IMR-90 (cell line): ENCODE measurements at regions of chr7 and their contacts with region 1.

Region 1: DNA sequence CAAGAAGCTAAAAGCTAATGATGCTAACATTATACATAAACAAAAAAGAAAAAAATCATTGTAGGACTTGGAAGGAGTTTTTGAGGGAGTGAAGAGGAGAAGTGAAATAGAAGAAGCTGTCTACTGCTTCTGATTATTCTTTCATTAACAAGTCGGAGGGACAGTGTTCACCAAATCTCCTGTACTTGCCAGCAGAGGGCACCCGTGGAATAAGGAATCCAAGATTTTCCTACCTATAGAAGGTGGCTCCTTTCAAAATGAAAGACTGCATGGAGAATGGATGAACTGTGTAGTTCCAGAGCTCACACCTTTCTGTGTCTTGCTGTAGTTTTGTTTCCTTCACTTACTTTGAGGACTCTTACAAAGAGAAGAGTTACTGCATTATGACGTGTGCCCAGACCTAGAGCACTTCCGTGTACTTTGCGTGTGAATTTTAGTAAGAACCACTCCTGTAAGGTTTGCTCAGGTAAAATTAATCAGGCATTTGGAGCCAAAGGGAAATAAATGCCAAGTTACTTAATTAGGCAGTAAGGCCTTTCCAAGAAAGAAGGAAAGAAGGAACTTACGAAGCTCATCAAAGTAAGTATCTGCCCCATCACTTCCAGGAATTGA is 145.1 kb downstream of the SEMA3D start:
- DNase-seq: peak; percentile 69
- ATAC-seq: peak; percentile 73
- H3K4me3 ChIP-seq: no peak overlapping the region
- H3K27ac ChIP-seq: no peak overlapping the region
- H3K4me1 ChIP-seq: no peaks in the 10 kb centered on the region
- H3K27me3 ChIP-seq: no peaks in the 10 kb centered on the region
- CTCF ChIP-seq: peak; percentile 86
- POLR2A ChIP-seq: no peak
- RAD21 ChIP-seq: peak; percentile 92

Region 2: DNA sequence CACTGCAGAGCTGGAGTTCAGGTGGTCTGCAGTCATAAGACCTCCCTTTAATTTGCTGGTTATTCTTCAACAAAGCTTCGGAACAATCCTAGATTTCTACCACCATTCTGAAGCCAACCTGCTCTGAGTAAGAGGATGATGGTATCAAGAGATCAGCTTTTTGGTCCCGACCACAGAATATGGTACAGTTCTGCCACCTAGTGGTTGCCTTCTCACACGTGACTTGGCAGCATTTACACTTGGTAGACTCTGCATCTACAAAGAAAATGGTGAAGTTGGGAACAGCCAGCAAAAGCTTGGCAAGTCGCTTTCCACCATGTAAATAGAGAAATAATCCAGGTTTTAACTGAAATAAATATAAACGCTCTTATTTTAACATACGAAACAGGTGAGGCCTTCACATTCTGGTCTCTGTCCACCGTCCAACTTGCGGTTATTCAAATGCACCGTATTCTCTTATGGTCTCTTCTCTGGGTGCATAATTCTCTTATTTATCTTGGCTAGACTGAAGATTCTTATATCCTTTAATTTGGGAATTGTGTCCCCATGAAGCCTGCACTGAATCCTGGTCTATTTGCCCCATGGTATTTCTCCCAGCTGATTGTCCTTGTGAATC is 1428.1 kb after region 1 on chr7:
- CTCF ChIA-PET with region 1: no interaction called
- POLR2A ChIA-PET with region 1: no interaction called
- dilution Hi-C with region 1: no loop called
- in situ Hi-C with region 1: no loop called
- intact Hi-C with region 1: loop called (anchors 10 kb)
- DNase-seq: peak; percentile 55
- ATAC-seq: no peak
- H3K4me3 ChIP-seq: no peak overlapping the region
- H3K27ac ChIP-seq: no peak overlapping the region
- H3K4me1 ChIP-seq: no peaks in the 10 kb centered on the region
- H3K27me3 ChIP-seq: no peaks in the 10 kb centered on the region
- CTCF ChIP-seq: peak; percentile 57
- POLR2A ChIP-seq: no peak
- RAD21 ChIP-seq: peak; percentile 66